WTC11 (cell line): ENCODE measurements at regions of chr19 and their contacts with region 1.

Region 1: DNA sequence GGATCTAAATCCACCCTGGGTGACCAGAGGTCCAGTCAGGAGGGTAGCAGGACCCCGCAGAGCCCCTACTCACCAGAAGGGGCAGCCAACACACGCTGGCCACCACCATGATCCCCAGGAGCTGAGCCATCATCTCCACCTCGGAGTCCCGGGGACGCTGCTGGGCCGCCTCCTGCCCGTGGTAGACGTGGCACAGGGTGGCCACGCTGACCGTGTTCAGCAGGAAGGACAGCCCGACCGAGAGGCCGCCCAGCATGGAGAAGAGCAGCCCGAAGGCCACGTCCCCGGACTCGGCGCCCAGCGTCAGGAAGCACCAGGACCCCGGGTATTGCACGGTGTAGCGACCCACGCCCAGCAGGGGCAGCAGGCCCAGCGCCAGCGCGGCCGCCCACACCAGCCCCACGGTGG is 6.9 kb downstream of the TBXA2R start:
- DNase-seq: peak; percentile 72
- ATAC-seq: peak; percentile 92
- H3K4me3 Mint-ChIP-seq: no peak overlapping the region
- H3K27ac Mint-ChIP-seq: no peak overlapping the region
- H3K4me1 Mint-ChIP-seq: no peaks in the 10 kb centered on the region
- H3K27me3 Mint-ChIP-seq: 0 out of 2 replicates have a peak, but pooled peaks cover 2% of the 10 kb centered on the region
- CTCF ChIP-seq: peak; percentile 43

Region 2: DNA sequence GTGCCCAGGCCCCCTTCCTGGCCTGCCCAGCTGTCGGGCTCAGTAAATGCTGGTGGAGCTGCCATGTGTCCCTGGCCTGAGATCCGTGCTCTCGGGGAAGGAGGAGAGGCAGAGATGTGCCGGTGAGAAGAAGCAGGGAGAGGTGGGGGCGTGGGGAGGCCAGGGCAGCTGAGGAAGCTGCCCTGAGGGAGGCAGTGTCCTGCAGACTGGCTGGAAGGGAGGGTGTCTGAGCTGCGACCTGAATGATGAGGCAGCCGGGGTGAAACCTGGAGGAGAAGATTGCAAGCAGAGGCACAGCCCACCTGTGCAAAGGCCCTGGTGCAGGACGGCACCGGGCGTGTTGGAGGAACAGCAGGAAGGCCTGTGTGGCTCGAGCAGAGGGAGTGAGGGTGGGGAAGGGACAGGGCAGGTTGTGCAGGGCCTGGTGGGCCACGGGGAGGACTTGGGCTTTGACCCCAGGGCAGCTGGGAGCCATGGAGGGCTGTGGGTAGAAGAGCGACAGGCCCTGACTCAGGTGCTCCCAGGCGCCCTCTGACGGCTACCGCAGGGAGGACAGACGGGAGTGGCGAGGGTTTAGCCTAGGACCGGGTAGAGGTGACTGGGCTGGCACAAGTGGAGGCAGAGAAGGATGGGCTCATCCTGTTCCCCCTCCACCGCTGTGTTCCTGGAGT is 389.3 kb before region 1 on chr19:
- CTCF ChIA-PET with region 1: no interaction called
- POLR2A ChIA-PET with region 1: no interaction called
- DNase-seq: peak; percentile 81
- ATAC-seq: peak; percentile 91
- H3K4me3 Mint-ChIP-seq: no peak overlapping the region
- H3K27ac Mint-ChIP-seq: no peak overlapping the region; the same call in 1 of the 2 replicates
- H3K4me1 Mint-ChIP-seq: peaks cover 3% of the 10 kb centered on the region; the same call in 1 of the 2 replicates
- H3K27me3 Mint-ChIP-seq: no peaks in the 10 kb centered on the region
- CTCF ChIP-seq: peak; percentile 25; the same call in 1 of the 2 replicates

Region 3: DNA sequence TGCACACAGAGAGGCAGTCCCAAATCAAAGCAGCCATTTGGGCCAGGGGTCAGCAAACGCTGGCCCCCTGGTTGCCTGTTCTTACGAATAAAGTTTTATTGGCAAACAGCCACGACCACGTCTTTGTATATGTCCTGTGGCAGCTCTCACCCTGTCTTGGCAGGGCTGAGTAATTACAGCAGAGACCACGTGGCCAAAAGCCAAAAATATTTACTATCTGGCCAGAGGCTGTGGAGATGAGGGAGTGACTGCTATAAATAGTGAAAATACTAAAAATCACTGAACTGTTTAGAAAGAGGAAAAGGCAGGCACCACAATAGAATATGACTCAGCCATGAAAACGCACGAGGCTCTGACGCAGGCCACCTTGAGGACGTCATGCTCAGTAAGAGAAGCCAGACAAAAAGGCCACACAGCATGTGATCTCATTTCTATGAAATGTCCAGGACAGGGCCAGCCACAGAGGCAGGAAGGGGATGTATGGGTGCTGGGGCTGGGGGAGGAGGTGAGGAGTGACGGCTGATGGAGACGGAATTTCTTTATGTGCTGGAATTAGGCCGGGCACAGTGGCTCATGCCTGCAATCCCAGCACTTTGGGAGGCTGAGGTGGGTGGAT is 148.9 kb before region 1 on chr19:
- CTCF ChIA-PET with region 1: no interaction called
- POLR2A ChIA-PET with region 1: no interaction called
- DNase-seq: no peak
- ATAC-seq: no peak
- H3K4me3 Mint-ChIP-seq: no peak overlapping the region
- H3K27ac Mint-ChIP-seq: no peak overlapping the region
- H3K4me1 Mint-ChIP-seq: no peaks in the 10 kb centered on the region
- H3K27me3 Mint-ChIP-seq: no peaks in the 10 kb centered on the region
- CTCF ChIP-seq: no peak

Region 4: DNA sequence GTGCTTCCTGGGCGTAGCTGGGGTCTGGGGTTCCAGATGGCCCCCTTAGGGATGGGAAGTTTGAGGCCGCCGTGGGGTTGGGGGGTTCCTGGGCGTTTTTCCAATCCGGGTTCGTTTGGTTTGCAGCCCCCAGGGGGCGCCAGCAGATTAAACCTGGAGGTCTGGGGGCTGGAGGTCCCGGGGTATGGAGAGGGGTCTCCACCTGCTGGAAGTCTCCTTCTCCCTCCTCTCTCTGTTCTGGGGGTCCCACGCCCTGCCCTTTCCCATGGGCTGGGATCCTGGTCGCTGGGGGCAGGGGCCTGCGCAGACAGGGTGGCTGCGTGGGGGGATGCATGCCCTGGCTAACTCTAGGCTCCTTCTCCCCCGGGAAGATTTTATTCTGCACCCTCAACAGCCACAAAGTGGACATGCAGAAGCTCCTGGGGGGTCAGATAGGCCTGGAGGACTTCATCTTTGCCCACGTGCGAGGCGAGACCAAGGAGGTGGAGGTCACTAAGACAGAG is 13.6 kb before region 1 on chr19:
- CTCF ChIA-PET with region 1: interaction called, 16 read pairs
- POLR2A ChIA-PET with region 1: no interaction called
- DNase-seq: peak; percentile 77
- ATAC-seq: peak; percentile 76
- H3K4me3 Mint-ChIP-seq: peak overlapping the region; percentile 49
- H3K27ac Mint-ChIP-seq: no peak overlapping the region
- H3K4me1 Mint-ChIP-seq: no peaks in the 10 kb centered on the region
- H3K27me3 Mint-ChIP-seq: peaks cover 52% of the 10 kb centered on the region
- CTCF ChIP-seq: peak; percentile 62; the same call in 1 of the 2 replicates